Ovary (tissue), 10 donors: ENCODE measurements at regions of chr3 and their contacts with region 1.

Region 1: GRCh38 chr3:155242342-155242741 is 51.1 kb downstream of the STRIT1 start:
- DNase-seq: no peak
- H3K4me3 ChIP-seq: no peak overlapping the region
- H3K27ac ChIP-seq: no peak overlapping the region
- H3K4me1 ChIP-seq: no peaks in the 10 kb centered on the region
- H3K27me3 ChIP-seq: no peaks in the 10 kb centered on the region
- CTCF ChIP-seq: no peak
- EP300 ChIP-seq: no peak
- POLR2A ChIP-seq: no peak

Region 2: GRCh38 chr3:155202621-155203020 is 39.7 kb before region 1 on chr3:
- intact Hi-C with region 1: loop called in 1 of 4 experiments (anchors 1 kb)
- DNase-seq: no peak
- H3K4me3 ChIP-seq: no peak overlapping the region
- H3K27ac ChIP-seq: no peak overlapping the region
- H3K4me1 ChIP-seq: peaks cover 2% of the 10 kb centered on the region
- H3K27me3 ChIP-seq: no peaks in the 10 kb centered on the region
- CTCF ChIP-seq: no peak
- EP300 ChIP-seq: no peak
- POLR2A ChIP-seq: no peak

Region 3: GRCh38 chr3:155313300-155313699 is 71.0 kb after region 1 on chr3:
- intact Hi-C with region 1: no loop called
- DNase-seq: no peak
- H3K4me3 ChIP-seq: no peak overlapping the region
- H3K27ac ChIP-seq: no peak overlapping the region
- H3K4me1 ChIP-seq: no peaks in the 10 kb centered on the region
- H3K27me3 ChIP-seq: no peaks in the 10 kb centered on the region
- CTCF ChIP-seq: no peak
- EP300 ChIP-seq: no peak
- POLR2A ChIP-seq: no peak